H1 (cell line): ENCODE measurements at regions of chr3 and their contacts with region 1.

Region 1: GRCh38 chr3:184229394-184230080 is at the start of gene VWA5B2:
- DNase-seq: peak in 1 of 2 experiments; percentile 86
- H3K4me3 ChIP-seq: peak within 1 kb of the TSS; percentile 33 to 59 (median 45)
- H3K27ac ChIP-seq: no peak within 1 kb of the TSS
- H3K4me1 ChIP-seq: peaks cover 0 to 20% (median 4%) of the 10 kb centered on the region in 4 experiments; a peak in 5 of 7 replicates
- H3K27me3 ChIP-seq: peaks cover 35 to 60% (median 53%) of the 10 kb centered on the region in 4 experiments
- CTCF ChIP-seq: peak in 2 of 3 experiments; percentile 14 to 15; a peak in 1 of 4 replicates
- EP300 ChIP-seq: no peak
- POLR2A ChIP-seq: no peak
- RAD21 ChIP-seq: no peak; a peak in 1 of 4 replicates
- total RNA-seq, gene VWA5B2: 0.50 and 0.56 TPM in 2 replicates

Region 2: DNA sequence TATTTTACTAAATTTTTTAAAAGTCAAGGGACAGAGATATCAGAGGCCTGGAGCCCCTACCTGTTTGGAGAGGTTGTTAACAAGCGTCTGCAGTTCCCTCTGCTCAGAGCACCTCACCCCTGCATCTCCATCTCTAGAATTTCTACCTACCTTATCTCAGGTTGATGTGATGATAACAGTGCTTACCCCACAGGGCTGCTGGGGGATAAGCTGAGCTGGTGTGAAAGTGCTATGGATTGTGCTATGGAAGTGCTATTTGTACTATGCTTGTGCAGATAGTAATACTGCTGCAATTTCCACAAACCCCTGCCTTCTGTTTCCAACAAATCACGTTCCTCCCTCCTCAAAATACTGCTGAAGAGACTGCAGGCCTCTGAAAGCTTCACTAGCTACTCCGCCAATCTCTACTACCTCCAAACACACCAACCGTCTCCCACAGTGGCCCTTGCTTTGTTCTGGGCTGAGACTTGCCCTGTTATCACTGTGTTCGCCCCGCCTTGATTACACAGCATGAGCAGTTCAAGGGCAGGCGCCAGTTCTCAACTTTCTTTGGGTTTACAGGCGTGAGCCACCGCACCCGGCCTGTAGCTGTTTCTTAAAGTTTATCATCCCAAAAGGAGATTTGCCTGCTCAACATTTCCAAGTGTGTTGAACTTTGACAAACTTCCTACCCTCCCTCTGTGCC is 316.5 kb before region 1 on chr3:
- CTCF ChIA-PET with region 1: no interaction called
- POLR2A ChIA-PET with region 1: no interaction called
- DNase-seq: no peak
- H3K4me3 ChIP-seq: no peak overlapping the region
- H3K27ac ChIP-seq: no peak overlapping the region
- H3K4me1 ChIP-seq: peaks cover 0 to 10% (median 0%) of the 10 kb centered on the region in 4 experiments; a peak in 2 of 7 replicates
- H3K27me3 ChIP-seq: no peaks in the 10 kb centered on the region
- CTCF ChIP-seq: no peak
- EP300 ChIP-seq: no peak
- POLR2A ChIP-seq: no peak
- RAD21 ChIP-seq: no peak

Region 3: GRCh38 chr3:184096811-184097383 is 132.6 kb before region 1 on chr3 and contains the start of gene HTR3E:
- CTCF ChIA-PET with region 1: no interaction called
- POLR2A ChIA-PET with region 1: no interaction called
- DNase-seq: no peak
- H3K4me3 ChIP-seq: no peak within 1 kb of the TSS
- H3K27ac ChIP-seq: no peak within 1 kb of the TSS
- H3K4me1 ChIP-seq: no peaks in the 10 kb centered on the region
- H3K27me3 ChIP-seq: no peaks in the 10 kb centered on the region
- CTCF ChIP-seq: no peak
- EP300 ChIP-seq: no peak
- POLR2A ChIP-seq: no peak
- RAD21 ChIP-seq: no peak
- total RNA-seq, gene HTR3E: not detected in 2 replicates

Region 4: DNA sequence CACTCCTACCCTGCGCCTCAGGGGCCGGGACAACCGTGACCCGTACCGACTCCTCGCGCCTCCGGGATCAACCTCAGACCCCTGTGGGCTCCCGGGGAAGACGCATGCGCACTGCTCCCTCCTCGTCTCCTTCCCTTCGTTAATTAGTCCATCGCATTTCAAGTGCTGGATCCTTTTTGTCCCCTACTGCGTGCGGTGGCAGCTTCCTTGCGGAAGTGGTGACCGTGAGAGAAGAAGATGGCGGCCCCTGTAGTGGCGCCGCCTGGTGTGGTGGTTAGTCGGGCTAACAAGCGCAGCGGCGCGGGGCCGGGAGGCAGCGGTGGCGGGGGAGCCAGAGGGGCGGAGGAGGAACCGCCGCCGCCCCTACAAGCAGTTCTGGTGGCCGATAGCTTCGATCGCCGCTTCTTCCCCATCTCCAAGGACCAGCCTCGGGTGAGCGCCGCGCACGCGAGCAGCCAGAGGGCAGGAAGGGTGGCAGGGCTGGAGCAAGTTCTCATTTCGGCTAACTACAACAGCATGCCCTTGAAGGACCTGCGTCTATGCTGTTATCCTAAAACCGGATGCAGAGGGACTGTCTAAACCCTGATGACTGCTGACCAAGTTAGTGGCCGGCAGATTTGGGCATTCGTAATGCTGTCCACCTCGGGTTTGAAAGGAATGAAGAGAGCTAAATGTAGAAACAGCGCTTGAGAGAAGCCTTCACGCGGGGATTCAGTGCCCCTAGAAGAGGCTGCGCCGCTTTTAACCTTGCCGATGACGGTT is 94.2 kb before region 1 on chr3 and contains the start of gene EIF2B5:
- CTCF ChIA-PET with region 1: interaction called, 11 read pairs
- POLR2A ChIA-PET with region 1: no interaction called
- DNase-seq: peak; percentile 66 to 90
- H3K4me3 ChIP-seq: peak within 1 kb of the TSS; percentile 82 to 98 (median 88)
- H3K27ac ChIP-seq: peak within 1 kb of the TSS; percentile 32; the same call in 1 of the 2 replicates
- H3K4me1 ChIP-seq: peaks cover 2 to 9% (median 3%) of the 10 kb centered on the region in 4 experiments; a peak in 4 of 7 replicates
- H3K27me3 ChIP-seq: no peaks in the 10 kb centered on the region
- CTCF ChIP-seq: peak; percentile 21 to 27 (median 22); a peak in 3 of 4 replicates
- EP300 ChIP-seq: 0 out of 3 replicates have a peak, but pooled peaks of 1 of the 2 experiments have one; percentile 25
- POLR2A ChIP-seq: peak; percentile 83 to 85
- RAD21 ChIP-seq: peak in 1 of 2 experiments; percentile 15; a peak in 1 of 4 replicates
- total RNA-seq, gene EIF2B5: 40.0 and 42.5 TPM in 2 replicates

Region 5: DNA sequence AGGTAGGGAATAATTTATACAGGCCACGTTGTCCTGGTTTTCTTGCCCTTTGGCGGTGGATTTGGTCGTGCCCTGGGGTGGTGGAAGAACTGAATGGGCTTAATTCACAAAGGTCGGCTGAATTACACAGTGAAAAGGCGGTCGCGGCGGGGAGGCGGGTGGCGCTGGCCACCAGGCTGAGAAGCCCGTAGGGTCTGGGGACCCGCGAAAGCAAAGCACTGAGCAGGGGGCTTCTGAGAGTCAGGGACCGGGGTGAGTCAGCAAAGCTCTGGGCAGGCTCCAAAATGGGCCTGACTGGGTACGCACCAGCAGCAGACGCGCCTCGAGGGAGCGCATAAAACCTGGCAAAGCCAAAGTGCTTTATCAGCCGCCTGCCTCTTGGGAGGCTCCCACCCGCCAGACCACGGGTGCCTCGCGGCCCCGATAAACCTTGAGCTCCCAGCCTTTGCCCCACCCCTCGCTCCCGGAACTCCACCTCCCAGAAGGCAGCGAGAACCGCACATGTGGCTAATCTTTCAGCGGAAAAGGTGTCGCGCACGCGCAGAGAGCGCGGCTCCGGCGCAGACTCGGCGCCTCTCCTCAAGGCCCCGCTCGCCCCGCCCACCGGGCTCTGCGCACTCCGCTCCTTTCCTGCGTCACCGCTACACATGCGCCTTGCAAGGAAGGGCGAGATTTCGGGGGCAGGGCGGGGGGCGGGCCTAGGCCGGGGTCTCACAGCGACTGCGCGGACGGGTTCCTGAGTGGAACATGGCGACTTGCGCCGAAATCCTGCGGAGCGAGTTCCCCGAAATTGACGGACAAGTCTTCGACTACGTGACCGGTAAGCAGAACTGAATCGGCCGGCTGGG is 43.9 kb before region 1 on chr3 and contains the start of gene ABCF3:
- CTCF ChIA-PET with region 1: interaction called, 22 read pairs
- POLR2A ChIA-PET with region 1: interaction called, 10 read pairs
- DNase-seq: peak; percentile 98 to 99
- H3K4me3 ChIP-seq: peak within 1 kb of the TSS; percentile 86 to 96 (median 94)
- H3K27ac ChIP-seq: peak within 1 kb of the TSS; percentile 92
- H3K4me1 ChIP-seq: peaks cover 0 to 8% (median 5%) of the 10 kb centered on the region in 4 experiments; a peak in 6 of 7 replicates
- H3K27me3 ChIP-seq: no peaks in the 10 kb centered on the region; a peak in 1 of 7 replicates
- CTCF ChIP-seq: no peak
- EP300 ChIP-seq: no peak
- POLR2A ChIP-seq: peak; percentile 90 to 94
- RAD21 ChIP-seq: no peak
- total RNA-seq, gene ABCF3: 50.9 and 51.6 TPM in 2 replicates

Region 6: GRCh38 chr3:184209146-184209923 is 20.2 kb before region 1 on chr3:
- CTCF ChIA-PET with region 1: interaction called, 79 read pairs
- POLR2A ChIA-PET with region 1: no interaction called
- DNase-seq: no peak
- H3K4me3 ChIP-seq: no peak overlapping the region
- H3K27ac ChIP-seq: no peak overlapping the region
- H3K4me1 ChIP-seq: no peaks in the 10 kb centered on the region
- H3K27me3 ChIP-seq: no peaks in the 10 kb centered on the region
- CTCF ChIP-seq: no peak
- EP300 ChIP-seq: no peak
- POLR2A ChIP-seq: no peak
- RAD21 ChIP-seq: no peak

Region 7: DNA sequence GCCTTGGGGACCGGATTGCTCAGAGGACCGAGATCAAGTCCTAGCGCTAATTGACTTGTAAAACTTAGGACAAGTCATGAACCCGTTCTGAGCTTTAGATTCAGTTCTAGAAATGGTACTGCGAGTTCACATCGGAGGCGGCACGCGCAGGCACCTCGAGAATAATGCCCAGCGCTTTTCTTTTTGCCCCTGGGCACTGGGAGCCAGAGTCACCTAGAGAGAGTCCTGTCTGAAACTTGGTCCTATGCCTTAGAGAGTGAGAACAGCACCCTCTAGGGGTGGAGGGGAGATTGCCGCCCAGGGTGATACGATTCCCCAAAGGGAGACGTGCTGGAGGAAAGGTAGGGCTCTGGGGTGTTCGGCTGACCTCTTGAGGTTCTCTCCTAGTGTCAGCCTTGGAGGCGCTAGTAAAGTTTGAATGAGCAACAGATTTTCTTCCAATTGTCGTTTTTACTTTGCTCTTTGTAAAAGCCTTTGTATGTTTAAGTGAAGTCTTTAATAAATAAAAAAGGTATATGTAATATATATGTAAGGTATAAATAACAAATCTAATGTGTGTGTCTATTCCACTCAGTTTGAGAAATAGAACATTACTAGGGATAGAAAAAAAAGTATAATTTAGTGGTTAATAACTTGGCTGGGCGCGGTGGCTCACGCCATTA is 20.8 kb after region 1 on chr3:
- CTCF ChIA-PET with region 1: interaction called, 136 read pairs
- POLR2A ChIA-PET with region 1: interaction called, 6 read pairs
- DNase-seq: peak; percentile 94 to 98
- H3K4me3 ChIP-seq: peak overlapping the region; percentile 71 to 89 (median 82)
- H3K27ac ChIP-seq: no peak overlapping the region
- H3K4me1 ChIP-seq: no peaks in the 10 kb centered on the region
- H3K27me3 ChIP-seq: no peaks in the 10 kb centered on the region; a peak in 1 of 7 replicates
- CTCF ChIP-seq: peak; percentile 90 to 97 (median 91)
- EP300 ChIP-seq: no peak
- POLR2A ChIP-seq: no peak
- RAD21 ChIP-seq: peak; percentile 53 to 72

Region 8: DNA sequence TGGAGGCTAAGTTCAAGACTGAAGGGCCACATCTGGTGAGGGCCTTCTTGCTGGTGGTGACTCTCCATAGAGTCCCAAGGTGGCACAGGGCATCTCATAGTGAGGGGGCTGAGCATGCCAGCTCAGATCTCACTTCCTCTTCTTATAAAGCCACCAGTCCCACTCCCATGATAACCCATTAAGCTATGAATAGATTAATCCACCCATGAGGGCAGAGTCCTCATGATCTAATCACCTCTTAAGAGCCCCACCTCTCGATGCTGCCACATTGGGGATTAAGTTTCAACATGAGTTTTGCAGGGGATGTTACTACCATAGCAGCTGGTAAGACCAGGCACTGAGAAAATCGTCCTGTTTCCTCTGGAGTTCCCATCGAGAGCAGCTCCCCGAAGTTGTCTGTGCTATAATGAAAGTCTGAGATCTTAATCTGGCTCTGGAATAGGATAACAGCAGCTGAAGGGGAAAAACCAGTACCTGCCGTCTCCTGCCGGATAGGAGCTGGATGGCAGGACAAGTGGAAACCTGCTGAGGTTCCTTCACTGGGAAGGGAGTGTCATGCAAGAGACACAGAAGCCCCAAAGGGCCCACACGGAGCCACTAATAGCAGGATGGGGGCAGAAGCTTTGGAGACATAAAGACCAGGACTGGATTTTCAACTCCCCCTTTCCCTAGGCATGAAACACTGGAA is 252.6 kb after region 1 on chr3:
- CTCF ChIA-PET with region 1: no interaction called
- POLR2A ChIA-PET with region 1: no interaction called
- DNase-seq: no peak
- H3K4me3 ChIP-seq: no peak overlapping the region
- H3K27ac ChIP-seq: no peak overlapping the region
- H3K4me1 ChIP-seq: no peaks in the 10 kb centered on the region
- H3K27me3 ChIP-seq: no peaks in the 10 kb centered on the region
- CTCF ChIP-seq: no peak
- EP300 ChIP-seq: no peak
- POLR2A ChIP-seq: no peak
- RAD21 ChIP-seq: no peak